ENCODE measurements at regions of chr20 and their contacts with region 1.

Region 1: GRCh38 chr20:34363062-34363464 is at the start of gene ITCH:
- DNase-seq: peak; percentile 98
- H3K4me3 Mint-ChIP-seq: peak within 1 kb of the TSS; percentile 95
- H3K27ac Mint-ChIP-seq: peak within 1 kb of the TSS; percentile 98
- H3K4me1 Mint-ChIP-seq: peaks cover 33% of the 10 kb centered on the region
- H3K27me3 Mint-ChIP-seq: no peaks in the 10 kb centered on the region
- total RNA-seq, gene ITCH: 55.6 and 55.7 TPM in 2 replicates

Region 2: GRCh38 chr20:32484958-32485769 is 1877.9 kb before region 1 on chr20:
- intact Hi-C with region 1: loop called (anchors 10 kb)
- DNase-seq: peak; percentile 94
- H3K4me3 Mint-ChIP-seq: peak overlapping the region; percentile 85
- H3K27ac Mint-ChIP-seq: peak overlapping the region; percentile 86
- H3K4me1 Mint-ChIP-seq: peaks cover 19% of the 10 kb centered on the region
- H3K27me3 Mint-ChIP-seq: no peaks in the 10 kb centered on the region

Region 3: DNA sequence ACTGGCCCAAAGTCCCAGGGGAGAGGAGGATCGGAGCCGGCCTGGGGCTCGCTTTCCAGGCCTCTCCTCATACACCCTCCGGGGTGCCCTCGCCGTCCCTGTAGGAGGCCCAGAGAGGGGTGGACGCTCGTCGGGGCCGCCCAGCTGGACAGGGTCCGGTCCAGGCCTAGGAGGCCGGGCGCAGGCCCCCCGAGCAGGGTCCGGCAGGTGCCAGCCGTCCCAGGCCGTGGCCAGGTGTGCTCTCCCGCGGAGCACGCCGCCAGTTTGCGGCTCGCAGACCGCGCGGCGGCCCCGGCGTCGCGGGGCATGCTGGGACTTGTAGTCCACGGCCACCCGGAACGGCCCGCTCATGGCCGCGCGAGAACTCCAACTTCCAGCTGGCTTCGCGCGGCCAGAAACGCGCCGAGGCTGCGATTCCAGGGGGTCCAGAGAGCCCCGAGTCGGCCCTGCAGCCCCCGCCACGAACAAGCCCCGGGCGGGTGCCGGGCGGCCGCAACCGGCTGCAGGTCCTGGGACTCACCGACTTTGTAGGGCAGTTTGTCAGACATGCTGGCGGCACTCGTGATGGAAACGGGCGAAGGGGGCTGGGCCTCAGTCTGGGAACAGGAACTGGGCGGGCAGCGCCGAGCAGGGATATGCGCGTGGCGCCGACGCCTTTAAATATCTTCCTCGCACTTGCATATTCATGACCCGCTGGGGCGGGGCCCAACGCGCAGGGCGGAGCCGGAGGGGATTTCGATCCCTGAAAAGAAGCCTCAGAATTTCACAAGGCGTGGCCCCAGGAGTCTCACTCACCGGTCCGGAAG is 60.1 kb before region 1 on chr20 and contains the start of gene AHCY:
- intact Hi-C with region 1: loop called (anchors 1 kb)
- DNase-seq: peak; percentile 98
- H3K4me3 Mint-ChIP-seq: peak within 1 kb of the TSS; percentile 91
- H3K27ac Mint-ChIP-seq: peak within 1 kb of the TSS; percentile 94
- H3K4me1 Mint-ChIP-seq: peaks cover 18% of the 10 kb centered on the region
- H3K27me3 Mint-ChIP-seq: peaks cover 2% of the 10 kb centered on the region
- total RNA-seq, gene AHCY: 153 and 154 TPM in 2 replicates

Region 4: DNA sequence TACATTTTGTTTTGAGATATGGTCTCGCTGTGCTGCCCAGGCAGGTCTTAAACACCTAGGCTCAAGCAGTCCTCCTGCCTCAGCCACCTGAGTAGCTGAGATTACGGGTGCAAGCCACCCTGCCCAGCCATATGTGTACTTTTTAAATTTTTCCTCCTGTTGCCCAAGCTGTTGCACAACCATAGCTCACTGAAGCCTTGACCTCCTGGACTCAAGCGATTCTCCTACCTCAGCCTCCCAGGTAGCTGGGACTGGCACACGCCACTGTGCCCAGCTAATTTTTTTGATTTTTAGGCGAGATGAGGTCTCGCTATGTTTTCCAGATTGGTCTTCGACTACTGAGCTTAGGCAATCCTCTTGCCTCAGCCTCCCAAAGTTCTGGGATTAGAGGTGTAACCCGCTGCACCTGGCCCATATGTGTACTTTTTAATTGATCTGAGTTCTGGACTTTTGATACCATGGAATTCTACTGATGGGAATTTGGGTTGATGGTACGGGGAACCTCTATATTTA is 45.0 kb after region 1 on chr20:
- intact Hi-C with region 1: loop called (anchors 5 kb)
- DNase-seq: peak; percentile 34
- H3K4me3 Mint-ChIP-seq: no peak overlapping the region
- H3K27ac Mint-ChIP-seq: no peak overlapping the region
- H3K4me1 Mint-ChIP-seq: peaks cover 25% of the 10 kb centered on the region
- H3K27me3 Mint-ChIP-seq: no peaks in the 10 kb centered on the region

Measured in activated CD4-positive, alpha-beta T cell treated with anti-CD3 and anti-CD28 coated beads, Interleukin-2, amount 10 ng/mL, durations not matched to agents 24 days and 14 days (primary cell).